Activated naive CD4-positive, alpha-beta T cell treated with anti-CD3 and anti-CD28 coated beads for 36 hours (primary cell): ENCODE measurements at regions of chr10 and their contacts with region 1.

Region 1: GRCh38 chr10:14648005-14648765 is 126.5 kb downstream of the FAM107B start:
- DNase-seq: peak; percentile 83
- H3K4me3 Mint-ChIP-seq: peak overlapping the region; percentile 75
- H3K27ac Mint-ChIP-seq: peak overlapping the region; percentile 98
- H3K4me1 Mint-ChIP-seq: peaks cover 69% of the 10 kb centered on the region
- H3K27me3 Mint-ChIP-seq: no peaks in the 10 kb centered on the region

Region 2: DNA sequence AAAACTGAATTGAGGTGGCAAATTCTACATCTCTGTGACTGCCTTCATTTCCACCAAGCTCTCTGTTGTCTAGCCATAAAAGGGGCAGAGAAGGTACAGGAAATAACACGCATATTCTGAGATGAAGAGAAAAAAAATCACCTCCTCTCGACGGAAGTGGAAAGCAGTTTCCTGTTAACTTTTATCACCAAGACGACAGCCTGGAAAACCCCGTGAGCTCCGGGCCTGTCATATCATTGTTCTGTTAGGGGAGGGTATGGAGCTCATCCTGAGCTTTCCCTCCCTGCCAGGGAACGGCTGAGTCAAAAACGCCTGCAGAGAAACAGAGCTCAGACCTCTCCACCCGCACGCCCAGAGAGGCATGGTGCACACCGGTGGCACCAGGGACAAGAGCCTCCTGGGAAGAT is 861.2 kb before region 1 on chr10:
- CTCF ChIA-PET with region 1: no interaction called
- intact Hi-C with region 1: loop called (anchors 5 kb)
- DNase-seq: peak; percentile 92
- H3K4me3 Mint-ChIP-seq: peak overlapping the region; percentile 45
- H3K27ac Mint-ChIP-seq: peak overlapping the region; percentile 93
- H3K4me1 Mint-ChIP-seq: peaks cover 33% of the 10 kb centered on the region
- H3K27me3 Mint-ChIP-seq: no peaks in the 10 kb centered on the region

Region 3: DNA sequence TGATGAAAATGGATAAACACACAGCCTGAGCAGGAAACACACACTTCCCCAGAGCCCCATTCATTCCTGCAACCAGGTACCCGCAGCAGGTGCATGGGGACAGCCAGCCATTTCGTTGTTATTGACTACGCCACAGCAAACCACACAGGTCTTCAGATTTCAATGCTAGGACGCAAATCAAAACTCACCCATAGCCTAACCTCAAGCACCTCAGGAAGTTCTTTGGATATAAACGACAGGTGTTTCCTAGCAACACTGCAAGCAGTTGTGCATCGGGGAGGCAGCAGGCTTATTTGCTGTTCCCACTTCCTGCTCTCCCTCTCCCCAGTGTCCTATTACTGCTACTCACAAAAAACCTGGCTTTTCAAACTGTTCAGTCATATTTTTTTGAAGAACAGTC is 141.0 kb before region 1 on chr10:
- CTCF ChIA-PET with region 1: no interaction called
- intact Hi-C with region 1: loop called (anchors 1 kb)
- DNase-seq: peak; percentile 76
- H3K4me3 Mint-ChIP-seq: no peak overlapping the region
- H3K27ac Mint-ChIP-seq: peak overlapping the region; percentile 59
- H3K4me1 Mint-ChIP-seq: peaks cover 42% of the 10 kb centered on the region
- H3K27me3 Mint-ChIP-seq: no peaks in the 10 kb centered on the region

Region 4: GRCh38 chr10:14571866-14572507 is 76.2 kb before region 1 on chr10:
- CTCF ChIA-PET with region 1: interaction called, 4 read pairs
- intact Hi-C with region 1: loop called (anchors 1 kb)
- DNase-seq: peak; percentile 78
- H3K4me3 Mint-ChIP-seq: peak overlapping the region; percentile 69
- H3K27ac Mint-ChIP-seq: peak overlapping the region; percentile 97
- H3K4me1 Mint-ChIP-seq: peaks cover 81% of the 10 kb centered on the region
- H3K27me3 Mint-ChIP-seq: no peaks in the 10 kb centered on the region

Region 5: GRCh38 chr10:14665304-14665703 is 17.1 kb after region 1 on chr10:
- CTCF ChIA-PET with region 1: interaction called, 4 read pairs
- intact Hi-C with region 1: loop called (anchors 1 kb)
- DNase-seq: peak; percentile 65
- H3K4me3 Mint-ChIP-seq: no peak overlapping the region
- H3K27ac Mint-ChIP-seq: peak overlapping the region; percentile 78
- H3K4me1 Mint-ChIP-seq: peaks cover 53% of the 10 kb centered on the region
- H3K27me3 Mint-ChIP-seq: no peaks in the 10 kb centered on the region

Region 6: GRCh38 chr10:14779053-14779651 is 131.0 kb after region 1 on chr10:
- CTCF ChIA-PET with region 1: no interaction called
- intact Hi-C with region 1: no loop called
- DNase-seq: no peak
- H3K4me3 Mint-ChIP-seq: no peak overlapping the region
- H3K27ac Mint-ChIP-seq: no peak overlapping the region
- H3K4me1 Mint-ChIP-seq: peaks cover 7% of the 10 kb centered on the region
- H3K27me3 Mint-ChIP-seq: no peaks in the 10 kb centered on the region

Region 7: DNA sequence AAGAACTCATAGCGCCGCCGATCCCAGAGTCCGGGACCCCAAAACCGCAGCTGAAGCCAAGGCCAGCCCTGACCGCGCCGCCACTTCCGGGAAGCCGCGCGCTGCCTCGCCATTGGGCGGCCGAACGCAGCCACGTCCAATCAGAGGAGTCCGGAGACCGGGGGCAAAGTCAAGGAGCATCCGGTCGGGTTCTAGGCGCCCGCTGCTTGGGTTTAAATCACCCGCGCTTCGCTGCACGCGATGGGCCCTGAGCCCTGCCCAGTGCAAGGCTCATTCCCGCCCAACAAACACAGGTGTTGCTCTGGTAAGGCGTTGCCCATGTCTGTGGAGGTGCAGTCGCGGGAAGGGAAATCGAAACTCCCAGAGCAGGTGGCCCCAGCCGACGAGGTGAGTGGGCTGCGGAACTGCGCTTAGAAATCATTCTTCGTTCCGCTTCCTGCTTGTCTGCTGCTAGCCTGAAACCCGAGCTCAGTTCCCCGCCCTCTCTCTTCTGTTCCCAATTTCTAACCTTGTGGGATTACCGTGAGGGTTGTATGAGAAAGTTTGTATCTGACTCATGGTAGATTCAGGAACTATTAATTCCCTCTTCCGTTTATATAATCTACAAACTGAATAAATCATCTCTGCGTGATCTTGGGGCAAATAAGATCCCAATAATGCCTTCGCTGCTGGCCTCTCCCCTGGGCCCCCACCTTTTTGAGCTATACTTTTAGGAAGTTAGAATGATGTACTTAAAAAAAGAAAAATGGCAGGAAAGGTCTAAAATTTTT is 306.0 kb after region 1 on chr10 and contains the start of gene DCLRE1C:
- CTCF ChIA-PET with region 1: no interaction called
- intact Hi-C with region 1: loop called (anchors 1 kb)
- DNase-seq: peak; percentile 91
- H3K4me3 Mint-ChIP-seq: peak within 1 kb of the TSS; percentile 90
- H3K27ac Mint-ChIP-seq: peak within 1 kb of the TSS; percentile 93
- H3K4me1 Mint-ChIP-seq: peaks cover 54% of the 10 kb centered on the region
- H3K27me3 Mint-ChIP-seq: no peaks in the 10 kb centered on the region
- total RNA-seq, gene DCLRE1C: 9.8 to 13.9 TPM

Region 8: GRCh38 chr10:15237351-15237750 is 589.2 kb after region 1 on chr10:
- CTCF ChIA-PET with region 1: no interaction called
- intact Hi-C with region 1: no loop called
- DNase-seq: no peak
- H3K4me3 Mint-ChIP-seq: no peak overlapping the region
- H3K27ac Mint-ChIP-seq: no peak overlapping the region
- H3K4me1 Mint-ChIP-seq: peaks cover 11% of the 10 kb centered on the region
- H3K27me3 Mint-ChIP-seq: no peaks in the 10 kb centered on the region